Activated CD4-positive, alpha-beta T cell treated with anti-CD3 and anti-CD28 coated beads, Interleukin-2, amount 10 ng/mL, durations not matched to agents 24 days and 14 days (primary cell): ENCODE measurements at regions of chr11 and their contacts with region 1.

Region 1: DNA sequence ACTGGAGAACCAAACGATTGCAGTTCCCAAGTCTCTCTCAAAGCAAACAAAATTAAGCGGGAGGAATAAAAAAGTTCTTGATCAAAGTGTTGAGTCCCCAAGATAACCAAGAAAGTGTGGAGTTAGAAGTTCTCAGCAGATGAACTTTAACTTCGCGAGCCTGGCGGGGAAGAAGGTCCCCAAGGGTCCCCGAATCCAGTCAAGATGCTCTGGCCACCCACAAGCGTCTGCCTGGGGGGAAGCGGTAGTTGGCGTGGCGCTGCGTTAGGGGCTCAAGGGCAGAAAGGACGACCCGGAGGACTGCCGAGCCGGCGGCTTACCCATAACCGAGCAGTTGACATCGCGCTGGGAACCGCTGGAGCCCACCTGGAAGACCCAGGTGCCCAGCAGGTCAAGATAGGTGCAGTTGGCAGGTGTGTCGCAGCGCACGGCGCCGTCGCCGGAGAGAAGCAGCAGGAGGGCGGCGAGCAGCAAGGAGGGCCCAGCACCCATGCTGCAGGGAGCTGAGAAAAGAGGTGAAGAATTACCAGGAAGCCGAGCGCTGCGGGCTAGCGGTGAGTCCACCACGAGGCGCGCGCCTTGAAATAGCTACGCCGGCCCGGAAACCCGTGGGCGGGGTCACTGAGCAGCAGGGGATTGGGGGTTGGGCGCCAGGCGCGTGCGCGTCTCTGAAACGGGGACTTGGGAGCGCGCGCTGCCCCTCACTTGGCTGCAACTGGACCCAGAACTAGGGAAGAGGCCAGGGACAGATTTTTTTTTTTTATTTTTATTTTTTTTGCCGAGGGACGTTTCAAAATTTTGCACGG is at the start of gene CTSC:
- DNase-seq: peak; percentile 98
- H3K4me3 Mint-ChIP-seq: peak within 1 kb of the TSS; percentile 83
- H3K27ac Mint-ChIP-seq: peak within 1 kb of the TSS; percentile 99
- H3K4me1 Mint-ChIP-seq: peaks cover 40% of the 10 kb centered on the region
- H3K27me3 Mint-ChIP-seq: no peaks in the 10 kb centered on the region
- total RNA-seq, gene CTSC: 67.1 and 71.8 TPM in 2 replicates

Region 2: GRCh38 chr11:88301488-88302140 is 35.8 kb before region 1 on chr11:
- intact Hi-C with region 1: loop called (anchors 1 kb)
- DNase-seq: peak; percentile 57
- H3K4me3 Mint-ChIP-seq: peak overlapping the region; percentile 44
- H3K27ac Mint-ChIP-seq: peak overlapping the region; percentile 94
- H3K4me1 Mint-ChIP-seq: peaks cover 35% of the 10 kb centered on the region
- H3K27me3 Mint-ChIP-seq: no peaks in the 10 kb centered on the region

Region 3: DNA sequence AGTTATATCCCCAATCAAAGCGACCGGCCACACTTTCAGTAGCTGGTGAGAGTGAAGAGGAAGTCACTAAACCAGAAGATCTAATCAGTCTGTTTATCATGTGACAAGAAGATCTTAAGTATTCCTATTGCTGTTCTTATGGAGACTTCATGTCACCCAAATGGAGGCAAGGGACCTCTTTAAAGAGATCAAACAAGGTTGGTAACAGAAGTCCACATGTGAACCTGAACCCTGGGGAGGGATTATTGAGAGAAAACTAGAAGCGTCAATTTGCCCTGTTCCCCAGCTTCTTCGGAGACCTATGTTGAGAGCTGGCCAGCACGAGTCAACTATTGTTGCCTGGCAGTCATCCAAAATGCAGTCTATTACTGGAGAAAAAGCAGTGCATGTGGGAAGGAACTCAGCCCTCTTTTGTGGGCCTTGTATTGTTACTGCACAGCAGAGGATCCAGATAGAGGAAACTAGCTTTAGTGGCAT is 77.0 kb after region 1 on chr11:
- intact Hi-C with region 1: loop called (anchors 2 kb)
- DNase-seq: peak; percentile 74
- H3K4me3 Mint-ChIP-seq: peak overlapping the region; percentile 66
- H3K27ac Mint-ChIP-seq: no peak overlapping the region
- H3K4me1 Mint-ChIP-seq: peaks cover 38% of the 10 kb centered on the region
- H3K27me3 Mint-ChIP-seq: no peaks in the 10 kb centered on the region

Region 4: GRCh38 chr11:88535916-88536547 is 198.6 kb after region 1 on chr11:
- intact Hi-C with region 1: loop called (anchors 5 kb)
- DNase-seq: no peak
- H3K4me3 Mint-ChIP-seq: no peak overlapping the region
- H3K27ac Mint-ChIP-seq: no peak overlapping the region
- H3K4me1 Mint-ChIP-seq: peaks cover 13% of the 10 kb centered on the region
- H3K27me3 Mint-ChIP-seq: peaks cover 4% of the 10 kb centered on the region